GM12878 (cell line): ENCODE measurements at regions of chr4 and their contacts with region 1.

Region 1: DNA sequence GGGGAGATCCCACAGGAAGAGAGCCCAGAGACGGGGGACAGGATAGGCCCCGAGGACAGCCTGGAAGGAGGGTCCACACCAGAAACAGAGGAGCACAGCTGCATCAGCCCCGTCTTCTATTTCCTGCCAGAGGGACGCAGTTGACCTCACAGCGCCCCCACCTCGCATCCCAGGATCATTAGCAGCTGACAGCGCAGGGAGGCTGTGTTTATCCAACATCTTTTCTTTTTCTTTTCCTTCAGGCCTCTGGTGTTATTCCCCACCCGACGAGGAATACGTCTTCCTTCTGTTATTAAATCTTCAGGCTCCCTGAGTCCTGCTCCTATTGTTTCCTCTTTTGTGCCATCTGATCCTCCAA is 75.4 kb downstream of the DCHS2 start:
- DNase-seq: no peak
- ATAC-seq: peak; percentile 63
- H3K4me3 ChIP-seq: peak overlapping the region; percentile 78
- H3K27ac ChIP-seq: no peak overlapping the region; the same call in 1 of the 2 replicates
- H3K4me1 ChIP-seq: peaks cover 17% of the 10 kb centered on the region
- H3K27me3 ChIP-seq: 0 out of 4 replicates have a peak, but pooled peaks cover 0 to 2% of the 10 kb centered on the region in 2 experiments
- CTCF ChIP-seq: peak in 1 of 3 experiments; percentile 13; a peak in 2 of 6 replicates
- EP300 ChIP-seq: no peak
- POLR2A ChIP-seq: no peak
- RAD21 ChIP-seq: no peak

Region 2: DNA sequence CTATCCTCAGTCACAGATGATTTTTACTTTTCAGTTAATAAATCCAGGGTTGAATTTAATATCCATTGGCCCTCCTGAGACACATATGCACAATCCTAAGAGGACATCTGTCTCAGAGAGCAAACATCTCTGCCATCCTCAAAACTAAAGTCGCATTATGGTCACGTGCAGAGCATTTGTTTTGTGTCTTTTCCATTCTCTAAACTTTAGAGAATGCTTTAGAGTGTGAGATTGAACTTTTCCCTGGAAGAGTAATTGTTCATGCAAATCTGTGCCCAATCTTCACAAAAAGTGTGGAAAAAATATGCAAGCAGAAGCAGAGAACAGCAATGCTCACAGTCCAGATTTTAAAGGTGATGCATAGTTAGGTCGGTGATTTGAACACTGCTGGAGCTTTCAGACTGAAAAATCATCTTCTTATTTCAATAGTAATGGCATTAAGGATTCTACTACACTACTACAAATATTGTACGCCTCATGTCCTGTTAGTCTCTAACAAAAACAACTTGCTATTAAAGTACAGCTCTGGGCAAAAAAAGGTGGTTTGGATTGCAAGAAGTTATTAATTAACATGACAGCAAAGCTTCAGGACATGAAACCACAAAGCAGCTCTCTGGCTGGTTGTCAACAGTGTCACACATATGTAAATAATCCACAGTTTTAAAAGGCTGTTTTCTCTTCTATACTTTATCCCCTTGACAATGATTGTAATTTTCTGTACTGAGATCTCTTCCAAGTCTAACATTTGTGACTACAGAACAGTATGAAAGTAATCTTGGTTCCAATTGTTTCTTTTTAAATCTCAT is 55.6 kb after region 1 on chr4:
- CTCF ChIA-PET with region 1: interaction called, 3 read pairs
- POLR2A ChIA-PET with region 1: no interaction called
- RAD21 ChIA-PET with region 1: no interaction called
- SMC1A ChIA-PET with region 1: interaction called, 8 read pairs
- in situ Hi-C with region 1: no loop called
- intact Hi-C with region 1: loop called (anchors 5 kb)
- DNase-seq: peak; percentile 21
- ATAC-seq: peak; percentile 77
- H3K4me3 ChIP-seq: no peak overlapping the region
- H3K27ac ChIP-seq: no peak overlapping the region
- H3K4me1 ChIP-seq: peaks cover 3% of the 10 kb centered on the region; the same call in 1 of the 2 replicates
- H3K27me3 ChIP-seq: no peaks in the 10 kb centered on the region
- CTCF ChIP-seq: no peak
- EP300 ChIP-seq: no peak
- POLR2A ChIP-seq: no peak
- RAD21 ChIP-seq: no peak